WTC11 (cell line): ENCODE measurements at regions of chr3 and their contacts with region 1.

Region 1: DNA sequence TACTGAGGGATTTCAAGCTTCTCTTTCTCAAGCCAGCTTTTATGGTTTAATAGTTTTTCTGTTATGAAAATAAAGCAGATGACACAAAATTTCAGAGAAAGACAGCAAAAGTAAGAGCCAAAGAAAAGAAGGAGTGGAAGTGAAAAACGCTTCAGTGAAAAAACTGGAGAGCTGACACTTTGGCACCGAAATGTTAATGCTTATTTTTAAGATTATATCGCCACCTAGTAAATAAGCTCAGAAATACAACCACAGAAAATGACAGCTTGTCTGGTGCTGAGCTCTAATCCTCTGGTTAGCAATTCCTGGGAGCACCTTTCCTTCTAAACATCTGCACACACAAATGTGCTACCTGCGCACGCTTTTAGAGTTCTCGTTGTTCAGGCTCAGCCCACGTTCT is 101.6 kb downstream of the ZPLD1 start:
- DNase-seq: no peak
- ATAC-seq: peak; percentile 68
- H3K4me3 Mint-ChIP-seq: no peak overlapping the region
- H3K27ac Mint-ChIP-seq: no peak overlapping the region
- H3K4me1 Mint-ChIP-seq: no peaks in the 10 kb centered on the region
- H3K27me3 Mint-ChIP-seq: no peaks in the 10 kb centered on the region
- CTCF ChIP-seq: peak; percentile 15; the same call in 1 of the 2 replicates

Region 2: GRCh38 chr3:102235679-102236078 is 300.8 kb before region 1 on chr3:
- CTCF ChIA-PET with region 1: interaction called, 25 read pairs
- POLR2A ChIA-PET with region 1: no interaction called
- DNase-seq: peak; percentile 26
- ATAC-seq: peak; percentile 41
- H3K4me3 Mint-ChIP-seq: no peak overlapping the region
- H3K27ac Mint-ChIP-seq: no peak overlapping the region
- H3K4me1 Mint-ChIP-seq: peaks cover 42% of the 10 kb centered on the region
- H3K27me3 Mint-ChIP-seq: no peaks in the 10 kb centered on the region
- CTCF ChIP-seq: no peak

Region 3: GRCh38 chr3:102471001-102471400 is 65.5 kb before region 1 on chr3:
- CTCF ChIA-PET with region 1: interaction called, 13 read pairs
- POLR2A ChIA-PET with region 1: no interaction called
- DNase-seq: peak; percentile 66
- ATAC-seq: peak; percentile 100
- H3K4me3 Mint-ChIP-seq: no peak overlapping the region
- H3K27ac Mint-ChIP-seq: no peak overlapping the region
- H3K4me1 Mint-ChIP-seq: no peaks in the 10 kb centered on the region
- H3K27me3 Mint-ChIP-seq: no peaks in the 10 kb centered on the region
- CTCF ChIP-seq: peak; percentile 26; the same call in 1 of the 2 replicates

Region 4: GRCh38 chr3:102570517-102570916 is 34.1 kb after region 1 on chr3:
- CTCF ChIA-PET with region 1: no interaction called
- POLR2A ChIA-PET with region 1: no interaction called
- DNase-seq: no peak
- ATAC-seq: no peak
- H3K4me3 Mint-ChIP-seq: no peak overlapping the region
- H3K27ac Mint-ChIP-seq: no peak overlapping the region
- H3K4me1 Mint-ChIP-seq: peaks cover 7% of the 10 kb centered on the region
- H3K27me3 Mint-ChIP-seq: no peaks in the 10 kb centered on the region
- CTCF ChIP-seq: no peak